Posterior vena cava (tissue), 2 donors: ENCODE measurements at regions of chr17 and their contacts with region 1.

Region 1: DNA sequence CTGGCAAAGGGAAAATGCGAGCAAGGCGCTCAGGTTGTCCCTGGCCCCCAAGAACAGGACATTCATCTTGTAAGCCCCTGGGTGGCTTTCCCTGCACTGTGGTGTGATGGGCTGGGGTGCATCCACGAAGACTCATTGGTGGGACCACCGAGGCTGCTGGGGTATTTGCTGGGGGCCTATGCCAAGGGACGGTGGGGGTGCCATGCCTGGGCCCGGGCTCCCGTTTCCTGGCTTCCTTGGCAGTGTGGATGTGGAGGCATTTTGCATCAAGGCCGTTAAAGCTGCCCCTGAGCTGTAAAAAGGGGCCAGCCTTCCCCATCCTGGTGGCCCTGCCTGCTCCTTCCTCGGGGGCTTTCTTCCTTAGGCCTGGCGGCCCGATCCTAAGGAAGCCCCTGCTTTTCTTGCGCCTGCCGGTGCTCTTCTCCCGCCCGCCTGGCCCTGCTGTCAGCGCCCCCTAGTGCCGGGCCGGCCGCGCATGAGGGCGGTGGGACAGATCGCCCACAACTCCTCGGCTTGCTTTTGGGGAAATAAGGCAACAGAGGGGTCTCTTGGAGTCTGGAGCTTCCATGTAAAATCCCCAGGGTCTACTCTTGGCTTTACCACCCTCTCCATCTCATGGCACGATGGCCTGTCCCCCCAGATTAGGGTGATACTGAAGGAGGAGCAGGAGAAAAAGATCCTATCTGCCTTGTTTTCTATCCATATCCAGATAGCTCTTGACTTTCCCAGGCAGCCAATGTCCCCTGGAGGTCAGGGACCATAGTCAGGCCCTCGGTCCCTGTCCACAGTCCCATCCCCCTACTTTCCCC is 9.8 kb upstream of the TBX2 start:
- DNase-seq: no peak

Region 2: DNA sequence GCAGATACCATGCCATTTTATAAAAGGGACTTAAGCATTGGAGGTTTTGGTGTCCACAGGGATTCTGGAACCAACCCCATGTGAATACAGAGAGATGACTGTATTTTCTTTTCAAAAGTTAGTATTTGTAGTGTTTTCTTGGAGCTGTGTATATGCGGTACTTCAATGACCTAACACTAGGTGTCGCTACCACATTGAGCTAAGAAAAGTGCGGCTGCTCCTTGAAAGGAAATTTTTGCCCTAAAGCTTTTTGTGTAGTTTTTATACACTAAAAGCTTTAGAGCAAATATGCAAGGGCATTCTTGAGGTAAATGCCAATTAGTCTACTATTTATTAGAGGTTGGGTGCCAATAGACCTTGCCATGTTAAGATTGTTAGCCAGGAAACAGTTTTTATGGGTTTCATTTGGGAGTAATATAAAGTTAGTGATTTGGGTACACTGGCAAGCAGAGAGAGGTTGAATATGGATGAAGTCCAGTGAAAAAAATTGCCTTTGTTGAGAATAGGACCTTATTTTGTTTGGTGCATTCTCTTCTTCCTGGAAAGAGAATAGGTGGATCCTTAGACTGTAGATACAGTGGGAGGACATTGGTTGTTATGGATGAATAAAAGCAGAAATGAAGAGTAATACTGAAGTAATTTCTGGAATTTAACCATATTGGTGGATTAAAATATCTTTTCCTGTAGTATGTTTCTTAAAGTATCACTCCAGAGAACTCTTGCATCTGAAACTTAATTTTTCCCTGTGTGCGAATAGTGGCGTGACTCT is 668.9 kb before region 1 on chr17:
- intact Hi-C with region 1: loop called in 1 of 2 experiments (anchors 10 kb)
- DNase-seq: no peak

Region 3: DNA sequence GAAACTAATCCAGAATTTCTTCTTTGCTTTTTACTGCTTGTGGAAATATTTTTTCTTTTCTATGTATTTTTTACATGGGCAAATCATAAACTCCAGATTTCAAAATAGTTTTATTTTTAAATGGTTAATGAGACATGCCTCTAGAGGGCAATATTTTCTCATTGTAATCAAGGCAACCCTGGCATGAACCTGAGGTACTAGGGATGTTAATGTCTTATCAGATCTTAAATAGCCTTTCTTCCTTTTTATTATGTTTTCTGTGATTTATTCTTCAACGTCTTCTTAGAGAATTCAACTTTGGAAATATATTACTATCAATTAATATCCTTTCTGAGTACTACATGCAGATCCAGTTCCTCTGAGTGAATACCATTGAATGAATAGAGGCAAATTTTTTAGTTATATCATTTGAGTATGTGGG is 387.5 kb before region 1 on chr17:
- intact Hi-C with region 1: loop called (anchors 10 kb)
- DNase-seq: no peak

Region 4: GRCh38 chr17:61463316-61463976 is 73.6 kb after region 1 on chr17:
- intact Hi-C with region 1: no loop called
- DNase-seq: no peak

Region 5: DNA sequence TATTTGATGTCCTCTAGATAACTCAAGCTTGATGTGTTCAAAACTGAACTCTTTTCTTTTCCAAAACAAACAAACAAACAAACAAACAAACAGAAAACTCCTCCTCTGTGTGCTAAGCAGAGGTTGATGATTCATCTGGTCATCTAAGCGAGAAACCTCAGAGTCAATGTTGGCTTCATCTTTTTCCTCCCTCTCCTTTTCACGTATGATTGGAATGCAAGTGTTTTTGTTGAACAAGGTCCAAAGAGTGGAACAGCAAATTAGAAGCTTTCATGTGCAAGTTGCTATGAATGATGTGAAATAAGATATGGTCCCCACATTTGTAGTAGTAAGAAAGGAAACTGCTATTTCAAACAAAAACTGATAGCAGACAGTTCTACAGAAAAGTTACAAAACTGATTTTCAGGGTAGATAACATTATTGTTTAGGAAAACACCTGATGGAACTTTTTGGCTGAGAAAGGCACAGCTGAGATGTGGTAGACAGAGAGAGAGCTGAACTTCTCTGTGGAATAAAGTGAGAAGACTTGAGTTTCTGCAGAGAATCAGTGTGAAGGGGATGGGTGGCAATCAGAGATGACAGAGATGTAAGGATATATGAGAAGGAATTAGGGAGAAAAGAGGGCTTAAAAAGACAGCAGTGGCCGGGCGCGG is 114.9 kb after region 1 on chr17:
- intact Hi-C with region 1: no loop called
- DNase-seq: no peak

Region 6: GRCh38 chr17:61942085-61942484 is 552.2 kb after region 1 on chr17:
- intact Hi-C with region 1: no loop called
- DNase-seq: no peak